B cell (primary cell): ENCODE measurements at regions of chr3 and their contacts with region 1.

Region 1: DNA sequence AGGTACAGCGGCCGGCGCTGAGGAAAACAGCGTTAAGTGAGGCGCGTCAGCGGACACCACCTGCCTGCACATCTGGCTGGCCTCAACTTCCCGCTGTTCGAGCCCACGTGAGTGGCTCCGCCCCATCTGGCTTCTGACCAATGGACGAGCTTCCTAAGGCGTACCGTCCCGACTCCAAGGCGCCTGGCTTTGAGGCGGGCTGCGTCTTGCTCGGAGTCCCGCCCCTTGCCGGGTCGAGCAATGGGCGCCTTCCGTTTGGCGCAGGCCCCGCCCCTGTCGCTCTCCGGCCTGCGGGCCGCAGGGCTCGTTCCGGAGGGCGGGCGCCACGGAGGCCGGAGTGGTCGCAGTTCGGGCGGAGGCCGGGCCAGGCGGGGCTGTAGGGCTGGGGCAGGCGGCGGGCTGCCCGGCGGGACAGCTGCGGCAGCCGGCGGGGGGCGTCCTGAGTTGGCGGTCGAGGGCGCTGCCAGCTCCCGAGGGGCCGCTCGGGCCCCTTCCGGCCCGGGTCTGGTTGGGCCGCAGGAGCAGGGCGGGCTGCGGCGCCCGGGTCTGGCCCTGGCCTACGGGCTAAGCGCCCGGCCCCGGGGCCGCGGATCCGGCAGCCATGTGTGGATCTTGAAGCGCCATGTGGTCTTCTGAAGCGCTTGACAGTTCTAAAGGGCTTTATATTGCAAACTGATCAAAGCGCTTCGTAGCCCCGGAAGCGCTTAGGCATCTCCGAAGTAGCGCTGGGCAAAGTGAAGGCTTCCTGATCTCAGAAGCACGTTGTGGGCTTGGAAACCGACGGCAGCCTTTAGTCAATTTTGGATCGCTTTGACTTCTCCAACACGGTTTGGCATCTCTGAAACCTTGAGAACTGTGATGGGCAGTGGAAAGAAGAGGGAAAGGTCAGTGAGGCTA is at the start of gene TATDN2:
- DNase-seq: peak; percentile 96
- ATAC-seq: peak; percentile 96
- H3K4me3 ChIP-seq: peak within 1 kb of the TSS; percentile 69 to 86 (median 82)
- H3K4me3 Mint-ChIP-seq: peak within 1 kb of the TSS; percentile 97
- H3K27ac ChIP-seq: peak within 1 kb of the TSS; percentile 70 to 78
- H3K27ac Mint-ChIP-seq: peak within 1 kb of the TSS; percentile 92
- H3K4me1 ChIP-seq: peaks cover 25 to 28% of the 10 kb centered on the region in 2 donors
- H3K4me1 Mint-ChIP-seq: peaks cover 39% of the 10 kb centered on the region
- H3K27me3 ChIP-seq: no peaks in the 10 kb centered on the region
- H3K27me3 Mint-ChIP-seq: no peaks in the 10 kb centered on the region
- CTCF ChIP-seq: no peak
- total RNA-seq, gene TATDN2: 62.7 and 62.9 TPM in 2 replicates

Region 2: DNA sequence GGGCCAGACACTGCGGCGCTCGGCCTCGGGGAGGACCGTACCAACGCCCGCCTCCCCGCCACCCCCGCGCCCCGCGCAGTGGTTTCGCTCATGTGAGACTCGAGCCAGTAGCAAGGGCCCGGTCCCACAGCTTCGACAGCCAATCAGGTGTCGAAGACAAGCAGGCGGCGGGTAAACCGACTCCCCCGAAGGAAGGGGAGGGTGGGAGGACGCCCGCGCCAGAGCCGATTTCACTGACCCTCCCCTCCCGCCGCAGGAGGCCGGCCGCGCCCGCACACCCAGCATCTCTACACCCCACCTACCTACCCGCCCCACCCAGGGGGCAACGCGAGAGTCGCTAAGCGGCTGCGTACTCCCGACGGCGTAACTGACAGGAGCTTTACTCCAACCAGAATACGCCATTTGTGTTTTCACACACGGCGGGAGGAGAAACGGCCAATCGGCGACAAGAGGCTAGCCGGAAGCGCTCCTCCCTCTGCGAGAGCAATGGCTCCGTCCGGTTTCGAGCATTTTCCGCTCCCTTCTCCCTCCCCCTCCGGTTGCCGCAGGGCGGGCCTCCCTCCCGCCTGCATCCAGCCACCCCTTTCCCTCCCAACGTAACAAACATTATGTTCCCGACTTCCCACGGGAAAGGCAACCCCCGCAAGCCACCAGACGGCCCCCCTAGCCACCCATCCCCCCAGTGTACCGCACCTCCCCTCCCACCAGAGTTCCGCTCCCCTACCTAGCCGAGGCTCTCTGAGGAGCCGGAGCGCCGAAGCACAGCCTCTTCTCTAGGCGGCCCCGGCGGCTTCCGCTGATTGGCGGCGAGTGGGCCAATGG is 851.5 kb before region 1 on chr3:
- CTCF ChIA-PET with region 1: no interaction called
- POLR2A ChIA-PET with region 1: interaction called, 5 read pairs
- intact Hi-C with region 1: loop called (anchors 2 kb)
- DNase-seq: peak; percentile 99
- ATAC-seq: peak; percentile 70
- H3K4me3 ChIP-seq: peak overlapping the region; percentile 58 to 85 (median 67)
- H3K4me3 Mint-ChIP-seq: peak overlapping the region; percentile 89
- H3K27ac ChIP-seq: peak overlapping the region; percentile 94 to 96
- H3K27ac Mint-ChIP-seq: peak overlapping the region; percentile 100
- H3K4me1 ChIP-seq: peaks cover 40 to 56% of the 10 kb centered on the region in 2 donors
- H3K4me1 Mint-ChIP-seq: peaks cover 60% of the 10 kb centered on the region
- H3K27me3 ChIP-seq: no peaks in the 10 kb centered on the region
- H3K27me3 Mint-ChIP-seq: no peaks in the 10 kb centered on the region
- CTCF ChIP-seq: no peak

Region 3: DNA sequence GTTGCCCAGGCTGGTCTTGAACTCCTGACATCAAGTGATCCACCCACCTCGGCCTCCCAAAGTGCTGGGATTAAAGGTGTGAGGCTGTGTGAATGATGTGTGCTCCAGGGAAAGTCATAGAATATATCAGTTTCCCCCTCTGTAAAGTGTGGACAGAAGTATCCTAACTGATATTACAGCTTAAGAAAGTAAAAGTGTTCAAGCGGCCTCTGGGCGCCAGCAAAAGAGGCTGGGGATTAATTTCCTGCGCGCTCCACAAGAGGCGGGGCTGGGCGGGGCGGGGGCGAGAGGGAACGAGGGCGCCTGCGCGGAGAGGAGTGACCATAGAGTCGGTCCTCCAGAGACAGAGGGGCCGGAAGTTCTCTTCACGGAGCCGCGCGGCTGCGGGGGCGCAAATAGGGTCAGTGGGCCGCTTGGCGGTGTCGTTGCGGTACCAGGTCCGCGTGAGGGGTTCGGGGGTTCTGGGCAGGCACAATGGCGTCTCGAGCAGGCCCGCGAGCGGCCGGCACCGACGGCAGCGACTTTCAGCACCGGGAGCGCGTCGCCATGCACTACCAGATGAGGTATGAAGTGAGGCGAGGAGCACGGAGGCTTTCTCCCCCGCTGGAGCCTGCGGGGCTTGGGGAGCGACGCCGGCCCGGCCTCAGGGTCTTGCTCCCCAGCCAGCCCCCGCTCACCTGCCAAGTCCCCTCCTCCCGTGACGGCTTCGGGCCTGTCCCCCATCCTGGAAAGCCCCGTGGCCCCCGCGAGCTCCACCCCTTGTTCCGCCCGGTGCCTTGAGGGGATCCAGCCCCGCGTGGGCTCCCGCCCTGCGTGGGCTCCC is 358.0 kb before region 1 on chr3 and contains the start of gene JAGN1:
- CTCF ChIA-PET with region 1: no interaction called
- POLR2A ChIA-PET with region 1: no interaction called
- intact Hi-C with region 1: loop called (anchors 5 kb)
- DNase-seq: peak; percentile 95
- ATAC-seq: peak; percentile 84
- H3K4me3 ChIP-seq: peak within 1 kb of the TSS; percentile 81 to 99 (median 98)
- H3K4me3 Mint-ChIP-seq: peak within 1 kb of the TSS; percentile 99
- H3K27ac ChIP-seq: peak within 1 kb of the TSS; percentile 100
- H3K27ac Mint-ChIP-seq: peak within 1 kb of the TSS; percentile 99
- H3K4me1 ChIP-seq: peaks cover 17 to 24% of the 10 kb centered on the region in 2 donors
- H3K4me1 Mint-ChIP-seq: peaks cover 38% of the 10 kb centered on the region
- H3K27me3 ChIP-seq: no peaks in the 10 kb centered on the region
- H3K27me3 Mint-ChIP-seq: no peaks in the 10 kb centered on the region
- CTCF ChIP-seq: no peak
- total RNA-seq, gene JAGN1: 25.7 and 26.2 TPM in 2 replicates

Region 4: GRCh38 chr3:9986237-9986725 is 262.2 kb before region 1 on chr3:
- CTCF ChIA-PET with region 1: interaction called, 3 read pairs
- POLR2A ChIA-PET with region 1: no interaction called
- intact Hi-C with region 1: loop called (anchors 1 kb)
- DNase-seq: no peak
- ATAC-seq: peak; percentile 28
- H3K4me3 ChIP-seq: peak overlapping the region; percentile 71 to 96 (median 82)
- H3K4me3 Mint-ChIP-seq: peak overlapping the region; percentile 98
- H3K27ac ChIP-seq: peak overlapping the region; percentile 88 to 97
- H3K27ac Mint-ChIP-seq: peak overlapping the region; percentile 100
- H3K4me1 ChIP-seq: peaks cover 16 to 22% of the 10 kb centered on the region in 2 donors
- H3K4me1 Mint-ChIP-seq: peaks cover 28% of the 10 kb centered on the region
- H3K27me3 ChIP-seq: no peaks in the 10 kb centered on the region
- H3K27me3 Mint-ChIP-seq: no peaks in the 10 kb centered on the region
- CTCF ChIP-seq: no peak

Region 5: GRCh38 chr3:10115326-10116137 is 132.9 kb before region 1 on chr3 and contains the start of gene BRK1:
- CTCF ChIA-PET with region 1: no interaction called
- POLR2A ChIA-PET with region 1: no interaction called
- intact Hi-C with region 1: loop called (anchors 1 kb)
- DNase-seq: peak; percentile 98
- ATAC-seq: peak; percentile 96
- H3K4me3 ChIP-seq: peak within 1 kb of the TSS; percentile 61 to 96 (median 84)
- H3K4me3 Mint-ChIP-seq: peak within 1 kb of the TSS; percentile 94
- H3K27ac ChIP-seq: peak within 1 kb of the TSS; percentile 48 to 85
- H3K27ac Mint-ChIP-seq: peak within 1 kb of the TSS; percentile 97
- H3K4me1 ChIP-seq: peaks cover 16 to 27% of the 10 kb centered on the region in 2 donors
- H3K4me1 Mint-ChIP-seq: peaks cover 34% of the 10 kb centered on the region
- H3K27me3 ChIP-seq: no peaks in the 10 kb centered on the region
- H3K27me3 Mint-ChIP-seq: no peaks in the 10 kb centered on the region
- CTCF ChIP-seq: no peak
- total RNA-seq, gene BRK1: 82.8 and 86.3 TPM in 2 replicates

Region 6: DNA sequence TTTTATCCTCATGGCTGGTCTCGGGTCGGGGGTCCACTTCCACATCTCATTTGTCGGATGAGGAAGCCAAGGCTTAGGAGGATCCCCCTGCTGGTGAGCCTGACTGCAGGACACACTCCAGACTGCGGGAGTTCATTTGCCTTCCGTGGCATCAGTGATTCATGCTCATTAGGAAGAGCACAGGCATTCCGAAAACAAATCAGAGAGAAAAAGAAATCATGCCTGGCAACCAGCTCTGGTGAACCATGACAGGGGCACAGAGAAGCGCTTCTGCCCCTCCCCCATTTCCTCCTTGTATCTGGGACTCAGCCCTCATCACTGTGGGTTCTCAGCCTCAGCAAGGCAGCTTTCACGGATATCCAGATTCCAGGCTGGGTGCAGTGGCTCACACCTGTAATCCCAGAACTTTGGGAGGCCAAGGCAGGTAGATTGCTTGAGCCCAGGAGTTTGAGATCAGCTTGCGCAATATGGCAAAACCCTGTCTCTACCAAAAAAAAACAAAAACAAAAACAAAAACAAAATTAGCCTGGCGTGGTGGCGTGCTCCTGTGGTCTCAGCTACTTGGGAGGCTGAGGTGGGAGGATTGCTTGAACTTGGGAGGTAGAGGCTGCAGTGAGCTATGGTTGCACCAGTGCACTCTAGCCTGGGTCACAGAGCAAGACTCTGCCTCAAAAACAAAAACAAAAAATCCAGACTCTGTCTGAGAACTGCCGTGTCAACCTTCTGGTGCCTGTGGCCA is 55.3 kb before region 1 on chr3:
- CTCF ChIA-PET with region 1: no interaction called
- POLR2A ChIA-PET with region 1: interaction called, 5 read pairs
- intact Hi-C with region 1: loop called (anchors 2 kb)
- DNase-seq: peak; percentile 89
- ATAC-seq: peak; percentile 64
- H3K4me3 ChIP-seq: peak overlapping the region in 3 of 5 experiments; percentile 11 to 53 (median 32)
- H3K4me3 Mint-ChIP-seq: peak overlapping the region; percentile 75
- H3K27ac ChIP-seq: peak overlapping the region; percentile 84 to 95
- H3K27ac Mint-ChIP-seq: peak overlapping the region; percentile 96
- H3K4me1 ChIP-seq: peaks cover 89 to 94% of the 10 kb centered on the region in 2 donors
- H3K4me1 Mint-ChIP-seq: peaks cover 82% of the 10 kb centered on the region
- H3K27me3 ChIP-seq: no peaks in the 10 kb centered on the region
- H3K27me3 Mint-ChIP-seq: no peaks in the 10 kb centered on the region
- CTCF ChIP-seq: peak; percentile 39

Region 7: GRCh38 chr3:10366651-10367101 is 118.2 kb after region 1 on chr3:
- CTCF ChIA-PET with region 1: no interaction called
- POLR2A ChIA-PET with region 1: no interaction called
- intact Hi-C with region 1: no loop called
- DNase-seq: no peak
- ATAC-seq: no peak
- H3K4me3 ChIP-seq: no peak overlapping the region
- H3K4me3 Mint-ChIP-seq: no peak overlapping the region
- H3K27ac ChIP-seq: no peak overlapping the region
- H3K27ac Mint-ChIP-seq: no peak overlapping the region
- H3K4me1 ChIP-seq: peaks cover 3 to 4% of the 10 kb centered on the region in 2 donors
- H3K4me1 Mint-ChIP-seq: peaks cover 8% of the 10 kb centered on the region
- H3K27me3 ChIP-seq: peaks cover 0 to 5% (median 0%) of the 10 kb centered on the region in 4 experiments
- H3K27me3 Mint-ChIP-seq: peaks cover 4% of the 10 kb centered on the region
- CTCF ChIP-seq: no peak

Region 8: GRCh38 chr3:10707400-10708215 is 459.2 kb after region 1 on chr3:
- CTCF ChIA-PET with region 1: no interaction called
- POLR2A ChIA-PET with region 1: no interaction called
- intact Hi-C with region 1: no loop called
- DNase-seq: peak; percentile 16
- ATAC-seq: no peak
- H3K4me3 ChIP-seq: no peak overlapping the region
- H3K4me3 Mint-ChIP-seq: peak overlapping the region; percentile 48
- H3K27ac ChIP-seq: no peak overlapping the region
- H3K27ac Mint-ChIP-seq: no peak overlapping the region
- H3K4me1 ChIP-seq: peaks cover 0 to 4% of the 10 kb centered on the region in 2 donors
- H3K4me1 Mint-ChIP-seq: peaks cover 12% of the 10 kb centered on the region
- H3K27me3 ChIP-seq: peaks cover 0 to 65% (median 33%) of the 10 kb centered on the region in 4 experiments
- H3K27me3 Mint-ChIP-seq: peaks cover 76% of the 10 kb centered on the region
- CTCF ChIP-seq: no peak